ENCODE measurements at regions of chr1 and their contacts with region 1.

Region 1: DNA sequence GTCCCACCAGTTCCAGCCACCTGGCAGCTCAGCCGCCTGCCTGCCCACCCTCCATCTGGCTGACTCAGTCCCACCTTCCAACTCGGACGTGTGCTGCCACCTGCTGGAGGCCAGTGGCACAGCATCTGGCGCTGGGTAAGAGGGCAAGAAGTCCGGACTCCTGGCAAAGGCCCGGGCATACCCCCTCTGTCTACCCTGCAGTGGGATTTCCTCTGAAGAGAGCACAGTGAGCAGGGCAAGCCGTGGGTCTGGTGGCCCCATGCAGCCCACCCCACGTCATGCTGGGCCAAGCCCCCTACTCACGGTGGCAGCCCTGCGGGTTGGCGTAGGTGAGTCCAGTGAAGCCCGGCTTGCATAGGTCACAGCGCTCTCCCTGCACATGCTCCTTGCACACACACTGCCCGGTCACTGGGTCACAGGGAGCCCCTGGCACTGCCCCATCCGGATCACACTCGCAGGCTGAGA is 24.5 kb downstream of the LAMB3 start:
- DNase-seq: peak; percentile 50 to 65 (median 61)
- H3K4me3 ChIP-seq: no peak overlapping the region
- H3K4me3 Mint-ChIP-seq: peak overlapping the region in 1 of 8 donors; percentile 23
- H3K27ac ChIP-seq: no peak overlapping the region
- H3K27ac Mint-ChIP-seq: no peak overlapping the region
- H3K4me1 ChIP-seq: peaks cover 4% of the 10 kb centered on the region
- H3K4me1 Mint-ChIP-seq: peaks cover 2 to 18% (median 6%) of the 10 kb centered on the region in 4 donors
- H3K27me3 ChIP-seq: no peaks in the 10 kb centered on the region
- H3K27me3 Mint-ChIP-seq: no peaks in the 10 kb centered on the region

Region 2: DNA sequence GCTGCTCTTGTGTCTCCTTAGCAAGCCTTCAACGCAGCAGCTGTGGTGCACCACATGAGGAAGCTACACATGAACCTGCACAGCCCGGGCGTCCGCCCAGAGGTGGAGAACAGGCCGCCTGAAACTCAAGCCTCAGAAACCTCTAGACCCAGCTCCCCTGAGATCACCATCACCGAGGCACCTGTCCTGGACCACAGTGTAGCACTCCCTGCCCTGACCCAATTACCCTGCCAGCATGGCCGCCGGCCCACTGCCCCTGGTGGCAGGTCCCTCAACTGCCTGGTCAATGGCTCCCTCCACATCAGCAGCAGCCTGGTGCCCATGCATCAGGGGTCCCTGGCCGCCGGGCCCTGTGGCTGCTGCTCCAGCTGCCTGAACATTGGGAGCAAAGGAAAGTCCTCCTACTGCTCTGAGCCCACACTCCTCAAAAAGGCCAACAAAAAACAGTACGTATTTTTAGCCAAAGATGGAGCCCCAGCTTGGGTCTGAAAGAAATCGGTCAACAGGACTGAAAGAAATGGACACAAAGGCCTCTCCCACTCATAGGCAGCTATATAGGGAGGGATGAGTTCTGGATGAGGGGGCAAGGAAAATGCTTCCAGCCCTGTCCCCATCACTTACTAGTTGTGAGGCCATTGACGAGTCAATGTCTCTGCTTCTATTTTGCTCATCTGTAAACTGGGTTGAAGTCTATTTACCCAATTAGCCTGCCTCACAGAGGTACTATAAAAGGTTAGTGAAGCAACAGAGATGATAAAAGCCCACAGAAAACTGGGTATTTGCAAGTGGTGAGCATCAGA is 15.8 kb before region 1 on chr1:
- CTCF ChIA-PET with region 1: interaction called, 10 read pairs
- POLR2A ChIA-PET with region 1: no interaction called
- intact Hi-C with region 1: no loop called
- DNase-seq: peak in 2 of 5 donors; percentile 11 to 13
- H3K4me3 ChIP-seq: no peak overlapping the region
- H3K4me3 Mint-ChIP-seq: peak overlapping the region in 1 of 8 donors; percentile 28
- H3K27ac ChIP-seq: no peak overlapping the region
- H3K27ac Mint-ChIP-seq: no peak overlapping the region
- H3K4me1 ChIP-seq: peaks cover 17% of the 10 kb centered on the region
- H3K4me1 Mint-ChIP-seq: peaks cover 0 to 8% (median 2%) of the 10 kb centered on the region in 4 donors
- H3K27me3 ChIP-seq: no peaks in the 10 kb centered on the region
- H3K27me3 Mint-ChIP-seq: peaks cover 0 to 2% of the 10 kb centered on the region in 2 donors

Region 3: GRCh38 chr1:209643285-209644020 is 15.7 kb after region 1 on chr1:
- CTCF ChIA-PET with region 1: interaction called, 17 read pairs
- POLR2A ChIA-PET with region 1: no interaction called
- intact Hi-C with region 1: no loop called
- DNase-seq: no peak
- H3K4me3 ChIP-seq: no peak overlapping the region
- H3K4me3 Mint-ChIP-seq: no peak overlapping the region
- H3K27ac ChIP-seq: no peak overlapping the region
- H3K27ac Mint-ChIP-seq: peak overlapping the region in 1 of 7 donors; percentile 1
- H3K4me1 ChIP-seq: no peaks in the 10 kb centered on the region
- H3K4me1 Mint-ChIP-seq: peaks cover 0 to 5% (median 1%) of the 10 kb centered on the region in 4 donors
- H3K27me3 ChIP-seq: no peaks in the 10 kb centered on the region
- H3K27me3 Mint-ChIP-seq: no peaks in the 10 kb centered on the region

Measured in CD4-positive, alpha-beta memory T cell (primary cell).